Activated T-helper 1 cell treated with anti-CD3 and anti-CD28 coated beads, Interleukin-12 subunit alpha, Interleukin-12 subunit beta, Interleukin-2, Interleukin-4 antibody, amounts not matched to agents 30 ng/mL and 10 ng/mL and 1 ng/mL, durations not matched to agents 14 hours and 24 hours and 36 hours (primary cell): ENCODE measurements at regions of chr2 and their contacts with region 1.

Region 1: GRCh38 chr2:8408560-8409460 is 273.0 kb upstream of the ID2 start:
- DNase-seq: peak; percentile 49
- H3K4me3 Mint-ChIP-seq: peak overlapping the region; percentile 1
- H3K27ac Mint-ChIP-seq: peak overlapping the region; percentile 80
- H3K4me1 Mint-ChIP-seq: peaks cover 19% of the 10 kb centered on the region
- H3K27me3 Mint-ChIP-seq: peaks cover 15% of the 10 kb centered on the region

Region 2: DNA sequence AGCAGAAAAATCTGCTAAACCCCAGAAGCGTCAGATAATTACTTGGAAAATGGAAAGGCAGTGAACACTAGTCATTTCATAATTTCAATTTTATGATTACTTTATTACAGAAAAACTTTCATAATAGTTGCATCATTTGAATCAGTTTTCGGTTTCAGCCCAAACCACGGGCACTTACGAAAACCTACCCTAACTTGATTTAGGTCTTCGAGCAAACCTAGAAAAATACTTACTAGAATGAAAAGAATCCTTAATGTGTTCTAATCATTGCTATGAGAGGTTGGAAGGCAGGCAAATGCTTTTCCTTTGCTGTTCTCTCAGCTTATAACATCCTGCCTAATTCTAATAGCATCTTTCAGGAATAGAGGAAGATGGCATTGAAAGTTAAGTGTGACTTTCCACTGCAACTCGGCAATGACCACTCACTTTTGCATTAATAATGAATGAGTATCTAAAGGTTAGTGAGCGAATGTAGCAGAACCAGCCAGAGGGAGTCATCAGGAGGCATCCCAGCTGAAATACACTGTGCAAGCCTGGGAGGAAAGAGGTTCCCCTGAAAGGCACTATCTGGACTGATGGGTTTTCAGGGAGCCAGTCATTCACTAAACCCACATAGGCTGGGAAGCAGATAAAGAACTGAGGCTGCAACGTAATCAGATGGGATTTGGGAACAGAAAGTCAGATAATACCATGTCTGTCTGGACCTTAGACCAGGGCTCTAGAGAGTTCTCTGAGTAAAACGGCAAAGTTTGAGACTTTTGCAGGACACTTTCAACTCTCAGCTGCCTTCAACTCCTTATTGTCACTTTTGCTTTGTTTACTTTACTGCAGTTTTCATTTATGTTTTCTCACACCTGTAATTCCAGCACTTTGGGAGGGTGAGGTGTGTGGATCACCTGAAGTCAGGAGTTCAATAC is 970.8 kb before region 1 on chr2:
- intact Hi-C with region 1: loop called (anchors 2 kb)
- DNase-seq: no peak
- H3K4me3 Mint-ChIP-seq: peak overlapping the region; percentile 54
- H3K27ac Mint-ChIP-seq: peak overlapping the region; percentile 88
- H3K4me1 Mint-ChIP-seq: peaks cover 86% of the 10 kb centered on the region
- H3K27me3 Mint-ChIP-seq: no peaks in the 10 kb centered on the region

Region 3: GRCh38 chr2:7692657-7693161 is 716.1 kb before region 1 on chr2:
- intact Hi-C with region 1: loop called (anchors 1 kb)
- DNase-seq: no peak
- H3K4me3 Mint-ChIP-seq: peak overlapping the region; percentile 48
- H3K27ac Mint-ChIP-seq: peak overlapping the region; percentile 94
- H3K4me1 Mint-ChIP-seq: peaks cover 51% of the 10 kb centered on the region
- H3K27me3 Mint-ChIP-seq: no peaks in the 10 kb centered on the region

Region 4: DNA sequence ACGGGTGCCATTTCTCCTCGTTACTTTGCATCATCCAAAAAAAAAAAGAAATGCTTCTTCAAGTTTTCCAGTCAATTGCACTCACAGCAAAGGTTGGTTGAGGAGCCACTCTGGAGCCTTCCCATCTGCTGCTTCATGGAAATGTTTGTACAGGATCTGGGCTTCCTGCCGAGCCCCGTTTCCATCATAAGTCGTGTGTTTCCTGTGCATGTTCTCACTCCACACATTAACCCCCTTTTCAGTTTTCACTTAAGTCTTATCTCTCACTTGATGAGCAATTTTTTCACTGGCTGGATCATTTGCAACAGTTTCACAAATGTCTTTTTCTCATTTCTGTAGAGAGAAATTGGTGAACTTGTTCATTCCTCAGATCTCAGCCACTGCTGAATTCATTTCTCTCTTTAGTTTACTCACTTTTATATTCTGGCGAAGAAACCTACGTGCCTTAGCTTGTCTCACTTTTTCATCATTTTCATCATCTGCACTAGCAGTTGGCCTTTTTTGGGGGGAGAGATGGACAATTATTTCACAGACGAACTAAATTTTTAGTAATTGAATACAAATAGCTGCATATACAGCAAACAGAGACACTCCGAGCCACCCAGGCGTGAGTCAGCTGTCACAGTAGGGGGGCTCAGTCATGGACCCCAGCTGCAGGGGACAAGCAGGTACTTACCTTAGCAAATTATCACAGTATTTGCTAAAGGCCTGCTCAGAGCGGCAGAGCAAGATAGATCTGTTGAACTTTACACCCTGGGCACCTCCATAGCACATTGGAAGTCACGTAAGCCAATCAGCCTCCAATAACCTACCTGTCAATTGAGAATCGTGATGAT is 477.8 kb before region 1 on chr2:
- intact Hi-C with region 1: loop called (anchors 5 kb)
- DNase-seq: no peak
- H3K4me3 Mint-ChIP-seq: no peak overlapping the region
- H3K27ac Mint-ChIP-seq: peak overlapping the region; percentile 81
- H3K4me1 Mint-ChIP-seq: peaks cover 11% of the 10 kb centered on the region
- H3K27me3 Mint-ChIP-seq: no peaks in the 10 kb centered on the region

Region 5: GRCh38 chr2:8204711-8205110 is 204.1 kb before region 1 on chr2:
- intact Hi-C with region 1: no loop called
- DNase-seq: no peak
- H3K4me3 Mint-ChIP-seq: no peak overlapping the region
- H3K27ac Mint-ChIP-seq: no peak overlapping the region
- H3K4me1 Mint-ChIP-seq: peaks cover 14% of the 10 kb centered on the region
- H3K27me3 Mint-ChIP-seq: peaks cover 5% of the 10 kb centered on the region

Region 6: DNA sequence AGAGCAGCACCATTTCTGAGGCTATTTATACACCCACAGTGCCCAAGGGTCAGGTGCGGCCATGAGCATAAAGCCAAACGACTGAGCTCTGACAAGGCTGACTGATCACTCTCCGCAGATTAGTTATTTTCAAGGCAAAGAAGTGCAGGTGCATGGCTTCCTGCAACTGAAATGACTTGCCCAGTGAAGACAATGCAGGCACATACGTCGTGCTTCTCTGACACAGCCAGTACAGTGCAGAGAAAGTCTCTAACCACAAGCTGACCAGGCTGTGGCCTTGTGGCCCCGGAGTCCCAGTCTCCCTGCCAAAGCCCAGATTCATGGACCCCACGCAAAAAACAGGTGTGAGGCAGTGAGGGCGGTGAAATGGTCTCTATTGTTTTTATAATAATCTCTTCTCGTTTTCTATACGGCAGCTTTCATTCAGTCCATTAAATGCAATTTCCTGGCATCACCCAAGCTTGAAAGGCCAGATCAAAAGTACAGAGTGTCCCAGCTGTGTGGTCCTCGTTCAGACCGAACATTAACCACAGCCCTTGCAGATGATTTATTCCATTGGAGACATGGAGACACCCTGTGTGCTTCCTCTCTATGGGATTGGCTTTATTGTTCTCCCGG is 173.9 kb before region 1 on chr2:
- intact Hi-C with region 1: loop called (anchors 1 kb)
- DNase-seq: no peak
- H3K4me3 Mint-ChIP-seq: no peak overlapping the region
- H3K27ac Mint-ChIP-seq: no peak overlapping the region
- H3K4me1 Mint-ChIP-seq: peaks cover 53% of the 10 kb centered on the region
- H3K27me3 Mint-ChIP-seq: peaks cover 9% of the 10 kb centered on the region

Region 7: DNA sequence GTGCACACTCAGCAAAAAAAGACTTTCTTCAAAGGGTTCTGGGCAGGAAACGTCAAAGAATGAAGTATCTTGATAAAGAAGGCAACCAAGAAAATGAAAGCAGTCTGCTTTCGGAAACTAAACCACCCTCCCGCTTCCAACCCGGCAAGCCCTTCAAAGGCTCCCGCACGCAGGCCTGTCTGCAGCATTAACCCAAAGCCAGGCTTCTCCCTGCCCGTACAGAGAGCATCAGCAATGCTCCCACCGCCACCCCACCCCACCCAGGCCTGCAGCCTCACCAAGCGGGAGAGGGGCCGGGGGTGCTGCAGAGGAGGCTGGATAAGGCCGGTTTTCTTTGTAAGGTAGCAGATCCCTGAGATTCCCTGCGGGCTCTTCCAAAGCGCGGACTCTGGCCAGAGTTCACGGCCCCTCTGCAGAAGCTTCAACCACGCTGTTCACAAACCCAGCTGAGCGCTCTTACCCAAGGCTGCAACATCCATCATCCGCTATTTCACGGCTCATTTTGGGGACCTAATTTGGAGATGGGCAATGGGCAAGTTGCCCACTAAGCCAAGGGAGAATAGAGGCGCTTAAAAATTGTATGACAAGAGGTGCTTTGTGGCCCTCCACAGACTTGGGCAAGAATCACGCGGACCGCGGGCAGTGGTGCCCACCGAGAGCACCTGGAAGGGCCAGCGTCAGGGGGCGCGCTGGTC is 47.5 kb after region 1 on chr2:
- intact Hi-C with region 1: loop called (anchors 2 kb)
- DNase-seq: peak; percentile 58
- H3K4me3 Mint-ChIP-seq: peak overlapping the region; percentile 66
- H3K27ac Mint-ChIP-seq: peak overlapping the region; percentile 88
- H3K4me1 Mint-ChIP-seq: peaks cover 56% of the 10 kb centered on the region
- H3K27me3 Mint-ChIP-seq: peaks cover 22% of the 10 kb centered on the region

Region 8: GRCh38 chr2:8606226-8606625 is 197.4 kb after region 1 on chr2:
- intact Hi-C with region 1: loop called (anchors 1 kb)
- DNase-seq: no peak
- H3K4me3 Mint-ChIP-seq: no peak overlapping the region
- H3K27ac Mint-ChIP-seq: no peak overlapping the region
- H3K4me1 Mint-ChIP-seq: peaks cover 44% of the 10 kb centered on the region
- H3K27me3 Mint-ChIP-seq: peaks cover 1% of the 10 kb centered on the region